Breast epithelium (tissue), 4 donors: ENCODE measurements at regions of chr5 and their contacts with region 1.

Region 1: DNA sequence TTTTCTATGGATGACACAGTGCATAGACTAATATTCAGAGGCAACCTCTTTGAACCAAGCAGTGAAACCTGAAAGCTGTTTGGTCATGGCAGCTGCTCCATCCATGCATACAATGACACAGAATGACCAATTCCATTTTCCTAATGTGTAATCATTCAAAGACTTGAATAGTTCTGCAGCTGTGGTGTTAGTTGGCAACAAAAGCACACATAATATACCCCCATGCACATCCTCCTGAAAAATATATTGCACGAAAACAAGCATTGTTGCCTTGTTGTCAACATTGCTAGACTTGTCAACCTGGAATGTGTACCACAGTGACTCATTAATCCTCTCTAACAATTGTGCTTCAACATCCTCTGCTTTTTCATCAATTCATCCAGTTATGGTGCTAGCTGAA is 71.0 kb upstream of the SEMA6A start:
- DNase-seq: no peak
- H3K4me3 ChIP-seq: no peak overlapping the region
- H3K27ac ChIP-seq: no peak overlapping the region
- H3K4me1 ChIP-seq: no peaks in the 10 kb centered on the region
- H3K27me3 ChIP-seq: no peaks in the 10 kb centered on the region
- CTCF ChIP-seq: no peak
- POLR2A ChIP-seq: no peak

Region 2: DNA sequence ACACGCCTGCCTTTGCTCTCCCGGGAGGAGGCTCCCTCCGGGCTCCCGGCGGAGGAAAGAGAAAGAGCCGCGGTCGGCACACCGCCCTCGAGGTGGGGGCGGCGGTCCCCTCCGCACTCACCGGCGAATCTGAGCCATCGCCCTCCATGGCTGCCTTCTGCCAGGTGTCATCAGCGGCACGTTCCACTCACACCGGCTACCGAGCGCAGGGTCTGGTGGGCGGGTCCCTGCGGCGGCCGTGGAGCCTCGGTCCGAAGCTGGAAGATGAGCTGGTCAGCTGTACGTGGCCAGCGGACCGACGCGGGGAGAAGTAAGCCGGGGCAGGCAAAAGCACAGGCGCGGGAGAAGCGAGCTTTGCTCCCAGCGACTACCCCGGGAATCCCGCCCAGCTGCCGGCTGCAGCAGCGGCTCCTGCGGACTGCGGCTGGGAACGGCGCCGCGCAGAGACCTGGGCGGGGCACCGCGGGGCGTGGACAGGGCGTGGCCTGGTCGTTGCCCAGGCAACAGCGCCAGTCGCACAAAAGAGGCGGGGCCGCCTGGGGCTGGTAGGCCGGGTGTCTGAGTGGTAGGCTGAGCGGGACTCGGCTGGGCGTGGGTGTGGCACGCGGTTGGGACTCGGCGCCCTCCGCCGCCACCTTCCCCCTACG is 1476.0 kb before region 1 on chr5 and contains the start of gene TRIM36:
- intact Hi-C with region 1: loop called (anchors 5 kb)
- DNase-seq: peak; percentile 88 to 97
- H3K4me3 ChIP-seq: peak within 1 kb of the TSS; percentile 58 to 79 (median 64)
- H3K27ac ChIP-seq: peak within 1 kb of the TSS; percentile 45 to 81
- H3K4me1 ChIP-seq: no peaks in the 10 kb centered on the region
- H3K27me3 ChIP-seq: peaks cover 0 to 25% of the 10 kb centered on the region in 2 donors
- CTCF ChIP-seq: no peak
- POLR2A ChIP-seq: no peak
- total RNA-seq, gene TRIM36: 1.8 to 7.2 (median 6.9) TPM

Region 3: DNA sequence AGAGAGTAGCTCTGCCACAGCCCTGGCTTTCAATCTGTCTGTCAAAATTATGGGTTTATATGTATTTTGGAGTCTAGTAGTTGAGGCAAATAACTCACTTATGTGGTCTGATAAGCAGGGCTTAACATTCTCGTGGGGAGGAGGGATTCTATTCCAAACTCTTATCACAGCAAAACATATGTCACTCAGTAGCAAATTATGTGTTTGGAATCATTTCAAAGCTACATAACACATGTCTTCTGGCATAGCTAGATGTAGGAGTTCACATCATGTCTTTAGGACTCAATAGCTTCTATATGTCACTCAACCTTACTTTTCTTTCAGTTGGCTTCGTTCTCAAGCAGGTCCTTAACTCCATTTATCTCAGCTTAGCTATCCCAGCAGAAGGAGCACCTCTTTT is 73.5 kb after region 1 on chr5:
- intact Hi-C with region 1: no loop called
- DNase-seq: no peak
- H3K4me3 ChIP-seq: no peak overlapping the region
- H3K27ac ChIP-seq: no peak overlapping the region
- H3K4me1 ChIP-seq: no peaks in the 10 kb centered on the region
- H3K27me3 ChIP-seq: no peaks in the 10 kb centered on the region
- CTCF ChIP-seq: no peak
- POLR2A ChIP-seq: no peak